ENCODE measurements at regions of chrX and their contacts with region 1.

Region 1: DNA sequence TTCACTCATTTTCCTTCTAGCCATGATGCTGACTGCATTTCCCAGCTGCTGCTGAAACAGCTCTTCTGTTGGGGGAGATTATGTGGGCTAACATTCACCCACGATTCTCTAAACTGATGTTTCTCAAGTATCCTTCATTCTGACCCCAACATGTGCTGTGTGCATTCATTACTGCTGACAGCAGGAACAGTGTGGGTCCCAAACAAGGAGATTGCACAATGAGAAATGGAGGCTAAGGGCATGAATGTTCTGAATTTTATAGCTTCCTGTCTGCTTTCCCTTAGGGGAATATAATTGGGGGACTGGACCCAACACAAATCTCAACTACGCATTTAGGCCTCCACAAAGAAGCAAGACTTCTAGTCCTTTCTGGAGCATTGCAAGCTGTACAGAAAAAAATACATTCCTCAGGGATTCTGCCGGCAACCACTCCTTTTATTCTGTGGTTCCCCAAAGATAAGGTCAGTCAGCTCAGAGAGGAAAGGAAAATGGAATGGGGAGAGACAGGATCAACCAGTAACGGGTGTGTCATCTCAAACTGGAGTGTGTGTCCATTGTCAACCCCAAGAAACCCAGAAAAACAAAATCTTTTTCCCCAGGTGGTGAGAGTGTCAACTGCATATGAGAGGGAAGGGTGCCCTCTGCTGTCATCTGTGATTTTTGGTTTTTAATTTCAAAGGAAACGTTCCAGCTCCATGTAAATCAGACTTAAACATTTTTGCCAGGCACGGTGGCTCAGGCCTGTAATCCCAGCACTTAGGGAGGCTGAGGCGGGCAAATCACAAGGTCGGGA is 81.5 kb upstream of the EGFL6 start:
- DNase-seq: peak; percentile 78
- H3K4me3 Mint-ChIP-seq: peak overlapping the region; percentile 11
- H3K27ac Mint-ChIP-seq: peak overlapping the region; percentile 93
- H3K4me1 Mint-ChIP-seq: peaks cover 49% of the 10 kb centered on the region
- H3K27me3 Mint-ChIP-seq: no peaks in the 10 kb centered on the region
- CTCF ChIP-seq: peak; percentile 57

Region 2: GRCh38 chrX:12946838-12947544 is 540.9 kb before region 1 on chrX:
- CTCF ChIA-PET with region 1: interaction called, 24 read pairs
- intact Hi-C with region 1: loop called (anchors 1 kb)
- DNase-seq: peak; percentile 86
- H3K4me3 Mint-ChIP-seq: peak overlapping the region; percentile 43
- H3K27ac Mint-ChIP-seq: peak overlapping the region; percentile 99
- H3K4me1 Mint-ChIP-seq: peaks cover 55% of the 10 kb centered on the region
- H3K27me3 Mint-ChIP-seq: no peaks in the 10 kb centered on the region
- CTCF ChIP-seq: peak; percentile 97

Region 3: DNA sequence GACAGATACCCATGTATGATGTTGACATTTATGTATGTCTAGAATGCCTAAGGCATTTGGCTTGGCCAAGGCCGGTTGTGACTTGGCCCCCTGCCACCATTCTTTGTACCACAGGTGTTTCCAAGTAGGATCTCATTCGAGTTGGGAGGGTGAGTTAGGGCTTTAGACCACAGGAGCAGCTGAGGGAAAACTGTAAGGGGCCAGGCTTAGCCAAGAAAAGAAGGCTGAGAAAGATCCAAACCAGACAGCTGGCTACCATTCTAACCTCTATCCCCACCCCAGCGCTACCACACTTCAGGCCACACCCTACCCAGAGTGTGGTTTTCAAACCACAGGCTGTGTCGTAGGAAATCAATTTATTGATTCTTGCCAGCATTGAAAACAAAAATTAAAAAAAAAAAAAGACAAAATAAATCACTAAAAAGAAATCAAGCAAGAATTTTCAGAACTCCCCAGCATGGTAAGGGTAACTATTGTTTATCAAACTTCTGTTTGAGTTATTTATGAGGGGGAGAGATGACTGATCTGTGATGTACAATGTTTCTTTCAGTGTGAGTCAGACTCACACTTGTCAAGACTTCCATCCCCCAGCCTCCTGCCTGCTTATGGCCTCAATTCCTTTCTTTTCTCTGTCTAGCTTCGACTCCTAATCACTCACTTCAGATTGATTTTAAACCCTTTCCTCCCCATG is 503.2 kb before region 1 on chrX:
- CTCF ChIA-PET with region 1: interaction called, 3 read pairs
- intact Hi-C with region 1: loop called (anchors 2 kb)
- DNase-seq: peak; percentile 85
- H3K4me3 Mint-ChIP-seq: peak overlapping the region; percentile 31
- H3K27ac Mint-ChIP-seq: peak overlapping the region; percentile 89
- H3K4me1 Mint-ChIP-seq: peaks cover 64% of the 10 kb centered on the region
- H3K27me3 Mint-ChIP-seq: no peaks in the 10 kb centered on the region
- CTCF ChIP-seq: no peak

Region 4: GRCh38 chrX:13194291-13195103 is 293.4 kb before region 1 on chrX:
- CTCF ChIA-PET with region 1: no interaction called
- intact Hi-C with region 1: loop called (anchors 1 kb)
- DNase-seq: no peak
- H3K4me3 Mint-ChIP-seq: no peak overlapping the region
- H3K27ac Mint-ChIP-seq: peak overlapping the region; percentile 23
- H3K4me1 Mint-ChIP-seq: peaks cover 50% of the 10 kb centered on the region
- H3K27me3 Mint-ChIP-seq: no peaks in the 10 kb centered on the region
- CTCF ChIP-seq: no peak

Region 5: DNA sequence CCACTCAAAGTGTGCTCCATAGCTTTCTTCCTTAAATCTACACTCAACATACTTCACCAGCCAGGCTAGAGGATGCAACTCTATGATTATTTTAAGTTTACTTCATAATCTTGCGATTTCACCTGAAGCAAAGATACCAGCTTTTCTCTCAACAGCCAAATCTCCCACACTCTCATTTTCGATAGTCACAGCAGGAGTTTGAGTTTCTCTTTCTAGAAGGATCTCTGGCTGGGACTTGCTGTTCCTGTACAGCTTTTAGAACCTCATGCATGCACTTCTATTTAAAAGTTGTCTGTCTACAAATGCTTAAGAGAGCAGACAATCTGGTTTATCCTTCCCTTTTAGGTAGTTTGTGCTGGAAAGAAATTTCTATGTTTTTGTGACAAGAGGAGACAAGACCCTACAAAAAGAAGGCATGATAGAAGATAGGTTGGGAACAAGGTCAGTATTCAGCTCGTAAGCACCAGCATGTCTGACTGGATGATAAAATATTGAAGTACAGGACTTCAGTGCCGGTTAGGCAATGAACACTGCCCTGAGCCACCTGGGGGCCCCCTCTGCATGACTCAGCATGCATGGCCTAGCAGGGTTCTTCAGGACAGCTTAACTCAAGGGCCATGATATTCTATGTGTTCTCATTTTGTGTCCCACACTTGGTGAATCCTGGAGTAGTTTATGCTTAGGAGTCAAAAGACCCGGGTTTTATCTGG is 233.7 kb before region 1 on chrX:
- CTCF ChIA-PET with region 1: interaction called, 6 read pairs
- intact Hi-C with region 1: loop called (anchors 10 kb)
- DNase-seq: peak; percentile 55
- H3K4me3 Mint-ChIP-seq: no peak overlapping the region
- H3K27ac Mint-ChIP-seq: peak overlapping the region; percentile 45
- H3K4me1 Mint-ChIP-seq: peaks cover 20% of the 10 kb centered on the region
- H3K27me3 Mint-ChIP-seq: no peaks in the 10 kb centered on the region
- CTCF ChIP-seq: no peak

Region 6: DNA sequence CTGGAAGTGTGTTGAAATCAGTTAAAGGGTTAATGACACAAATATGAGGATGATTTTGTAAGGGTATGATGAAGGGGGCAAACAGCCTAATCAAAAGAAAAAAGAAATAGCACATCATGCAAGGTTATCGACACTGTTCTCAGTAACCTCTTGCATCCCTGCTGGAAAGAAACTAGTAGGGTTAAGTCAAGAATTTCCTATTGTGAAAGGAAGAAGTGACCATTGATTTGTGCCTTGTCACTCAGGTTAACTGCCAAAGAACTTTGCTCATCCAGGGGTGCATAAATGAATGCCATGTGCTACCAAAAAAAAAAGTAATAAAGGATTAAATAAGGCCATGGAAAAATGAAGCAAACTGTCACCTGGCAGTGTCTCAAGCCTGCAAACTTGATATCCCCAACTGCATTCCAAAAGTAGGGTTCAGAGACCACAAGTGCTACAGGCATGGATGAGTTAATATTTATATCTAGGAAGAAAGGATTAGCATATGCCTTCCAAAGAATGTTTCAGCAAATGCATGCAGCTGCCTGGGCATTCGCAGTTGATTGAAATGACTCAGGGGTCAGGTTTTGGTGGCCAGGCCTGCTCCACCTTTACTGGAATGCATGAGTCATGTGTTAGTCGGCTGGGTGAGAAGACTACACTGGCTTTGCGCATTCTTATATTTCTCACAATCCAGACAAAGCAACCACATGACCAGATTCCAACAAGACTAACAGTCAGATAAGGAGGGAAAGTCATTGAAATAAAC is 89.7 kb before region 1 on chrX:
- CTCF ChIA-PET with region 1: interaction called, 3 read pairs
- intact Hi-C with region 1: loop called (anchors 1 kb)
- DNase-seq: peak; percentile 86
- H3K4me3 Mint-ChIP-seq: peak overlapping the region; percentile 21
- H3K27ac Mint-ChIP-seq: peak overlapping the region; percentile 93
- H3K4me1 Mint-ChIP-seq: peaks cover 41% of the 10 kb centered on the region
- H3K27me3 Mint-ChIP-seq: no peaks in the 10 kb centered on the region
- CTCF ChIP-seq: no peak

Measured in Calu3 (cell line).